Activated CD4-positive, alpha-beta memory T cell treated with anti-CD3 and anti-CD28 coated beads for 36 hours (primary cell): ENCODE measurements at regions of chr5 and their contacts with region 1.

Region 1: GRCh38 chr5:34486160-34486848 is 169.8 kb upstream of the RAI14 start:
- DNase-seq: peak; percentile 78
- H3K4me3 Mint-ChIP-seq: no peak overlapping the region
- H3K27ac Mint-ChIP-seq: no peak overlapping the region
- H3K4me1 Mint-ChIP-seq: peaks cover 8% of the 10 kb centered on the region
- H3K27me3 Mint-ChIP-seq: peaks cover 39% of the 10 kb centered on the region

Region 2: DNA sequence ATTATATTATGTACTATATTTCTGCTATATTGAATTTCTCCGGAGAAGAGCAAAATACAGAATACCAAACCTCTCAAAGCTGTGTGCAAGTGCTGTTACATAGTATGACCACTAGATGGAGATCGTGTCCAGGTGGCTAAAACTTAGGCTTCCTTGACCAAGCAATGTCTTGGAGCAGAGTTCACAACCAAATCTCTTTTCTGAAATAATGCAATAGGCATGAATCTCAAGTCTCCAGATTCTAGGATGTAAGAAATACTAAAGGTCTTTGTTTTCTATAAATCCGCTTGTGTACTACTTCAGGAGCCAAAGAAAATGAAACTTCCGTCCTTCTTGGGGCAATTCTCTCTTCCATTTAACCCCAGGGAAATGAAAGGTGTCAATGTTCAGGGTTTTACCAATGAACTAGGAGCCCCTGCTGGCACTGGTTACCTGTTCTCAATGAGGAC is 11.7 kb before region 1 on chr5:
- CTCF ChIA-PET with region 1: interaction called, 43 read pairs
- POLR2A ChIA-PET with region 1: interaction called, 3 read pairs
- intact Hi-C with region 1: no loop called
- DNase-seq: no peak
- H3K4me3 Mint-ChIP-seq: no peak overlapping the region
- H3K27ac Mint-ChIP-seq: no peak overlapping the region
- H3K4me1 Mint-ChIP-seq: no peaks in the 10 kb centered on the region
- H3K27me3 Mint-ChIP-seq: peaks cover 13% of the 10 kb centered on the region

Region 3: DNA sequence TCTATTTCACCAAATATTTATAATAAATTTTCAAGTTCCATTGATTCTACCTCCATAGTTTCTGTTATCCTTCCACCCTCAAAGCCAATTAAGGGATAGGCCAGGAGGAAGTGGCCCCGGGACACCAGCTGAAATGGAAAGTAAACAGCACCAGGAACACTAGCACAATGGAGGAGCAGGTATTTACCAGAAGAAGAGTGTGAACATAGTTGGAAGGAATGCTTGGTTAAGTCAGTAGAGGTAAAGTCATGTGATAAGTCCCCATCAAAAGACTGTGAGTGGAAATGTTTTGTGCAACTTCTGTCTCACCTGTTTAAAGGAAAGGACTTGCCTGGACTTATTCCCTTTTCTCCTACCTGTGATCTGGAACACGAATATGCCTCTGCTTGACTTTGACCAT is 23.1 kb after region 1 on chr5:
- CTCF ChIA-PET with region 1: interaction called, 10 read pairs
- POLR2A ChIA-PET with region 1: no interaction called
- intact Hi-C with region 1: no loop called
- DNase-seq: no peak
- H3K4me3 Mint-ChIP-seq: no peak overlapping the region
- H3K27ac Mint-ChIP-seq: no peak overlapping the region
- H3K4me1 Mint-ChIP-seq: peaks cover 7% of the 10 kb centered on the region
- H3K27me3 Mint-ChIP-seq: peaks cover 20% of the 10 kb centered on the region

Region 4: GRCh38 chr5:34533582-34534522 is 47.5 kb after region 1 on chr5:
- CTCF ChIA-PET with region 1: interaction called, 40 read pairs
- POLR2A ChIA-PET with region 1: no interaction called
- intact Hi-C with region 1: loop called (anchors 1 kb)
- DNase-seq: peak; percentile 48
- H3K4me3 Mint-ChIP-seq: no peak overlapping the region
- H3K27ac Mint-ChIP-seq: peak overlapping the region; percentile 24
- H3K4me1 Mint-ChIP-seq: peaks cover 28% of the 10 kb centered on the region
- H3K27me3 Mint-ChIP-seq: peaks cover 3% of the 10 kb centered on the region

Region 5: DNA sequence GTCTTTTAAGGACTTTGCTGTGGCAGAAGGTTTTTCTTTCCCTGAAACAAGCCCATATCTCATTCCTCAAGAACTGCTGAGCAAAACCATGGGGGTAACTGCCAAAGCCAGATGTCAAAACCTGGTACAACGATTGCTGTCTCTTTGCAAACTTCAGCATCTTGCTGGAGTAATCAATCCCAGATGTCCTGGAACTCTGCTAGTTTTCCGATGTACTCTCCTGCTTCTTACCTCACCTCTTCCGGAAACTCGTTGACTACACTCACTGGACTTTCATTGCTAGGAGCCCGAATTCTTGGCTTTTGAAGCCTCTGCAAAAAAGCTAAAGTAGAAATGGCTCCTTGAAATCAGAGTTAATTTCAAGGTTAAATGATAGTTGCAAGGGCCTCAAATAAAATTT is 405.7 kb after region 1 on chr5:
- CTCF ChIA-PET with region 1: interaction called, 12 read pairs
- POLR2A ChIA-PET with region 1: no interaction called
- intact Hi-C with region 1: no loop called
- DNase-seq: no peak
- H3K4me3 Mint-ChIP-seq: no peak overlapping the region
- H3K27ac Mint-ChIP-seq: no peak overlapping the region
- H3K4me1 Mint-ChIP-seq: no peaks in the 10 kb centered on the region
- H3K27me3 Mint-ChIP-seq: no peaks in the 10 kb centered on the region

Region 6: DNA sequence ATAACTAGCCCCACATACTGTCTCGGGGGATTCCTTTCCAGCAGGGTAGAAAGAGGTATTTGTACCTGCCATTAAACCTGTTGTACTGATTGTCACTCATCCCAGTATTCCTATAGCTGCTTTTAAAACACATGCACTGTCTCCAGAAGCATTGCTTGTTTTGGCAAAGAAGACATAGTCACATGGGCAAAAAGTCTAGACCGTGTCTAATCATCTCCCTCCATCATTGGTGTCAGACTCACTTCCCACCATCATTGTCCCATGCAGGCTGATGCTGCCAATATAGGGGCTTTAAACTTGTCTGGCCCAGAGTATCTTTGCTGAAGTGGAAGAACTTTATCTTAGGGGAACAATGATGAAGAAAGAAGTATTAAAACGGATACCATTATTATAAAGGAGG is 455.6 kb after region 1 on chr5:
- CTCF ChIA-PET with region 1: no interaction called
- POLR2A ChIA-PET with region 1: no interaction called
- intact Hi-C with region 1: no loop called
- DNase-seq: no peak
- H3K4me3 Mint-ChIP-seq: no peak overlapping the region
- H3K27ac Mint-ChIP-seq: no peak overlapping the region
- H3K4me1 Mint-ChIP-seq: no peaks in the 10 kb centered on the region
- H3K27me3 Mint-ChIP-seq: no peaks in the 10 kb centered on the region

Region 7: DNA sequence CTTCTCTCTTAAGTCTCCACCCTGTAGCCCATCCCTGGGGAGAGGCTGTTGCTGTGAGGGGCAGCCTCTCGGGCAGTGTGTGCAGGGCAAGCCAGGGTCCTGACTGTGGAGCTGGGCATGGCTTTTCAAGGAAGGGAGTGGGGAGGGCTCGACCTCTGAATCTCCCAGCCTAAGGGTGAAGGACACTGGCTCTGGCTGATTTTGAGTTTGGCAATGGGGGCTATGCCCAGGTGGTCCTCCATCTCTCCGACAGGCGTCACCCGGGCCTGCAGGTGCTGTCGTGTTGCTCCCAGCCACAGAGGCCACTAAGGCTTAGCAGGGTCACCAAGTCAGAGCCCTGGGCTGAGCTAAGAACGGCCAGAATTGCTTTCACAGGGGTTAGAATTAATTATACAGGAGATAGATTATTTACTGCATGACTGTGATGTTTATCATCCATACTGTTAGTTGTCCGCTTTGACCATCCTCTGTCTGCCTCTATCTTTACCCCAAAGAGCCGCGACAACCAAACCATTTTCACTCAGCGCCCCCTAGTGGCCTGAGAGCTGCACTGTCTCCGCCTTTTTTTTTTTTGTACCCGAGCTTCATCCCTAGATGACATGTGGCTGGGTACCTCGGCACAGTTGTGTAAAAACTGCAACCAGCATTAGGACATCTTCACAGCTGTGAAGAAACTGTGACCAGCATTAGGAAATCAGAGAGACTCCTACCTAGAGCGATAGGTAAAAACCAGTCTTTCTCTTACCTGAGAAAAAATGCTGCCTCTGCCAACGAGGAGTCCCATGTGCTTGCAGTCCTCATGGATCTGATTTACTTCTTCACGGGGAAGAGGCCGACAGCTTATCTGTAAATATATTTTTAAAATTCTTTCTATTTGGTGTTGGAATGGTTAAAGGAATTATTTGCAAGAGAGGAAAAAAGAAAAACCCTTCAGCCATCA is 517.0 kb after region 1 on chr5:
- CTCF ChIA-PET with region 1: interaction called, 7 read pairs
- POLR2A ChIA-PET with region 1: no interaction called
- intact Hi-C with region 1: loop called (anchors 1 kb)
- DNase-seq: peak; percentile 69
- H3K4me3 Mint-ChIP-seq: no peak overlapping the region
- H3K27ac Mint-ChIP-seq: no peak overlapping the region
- H3K4me1 Mint-ChIP-seq: no peaks in the 10 kb centered on the region
- H3K27me3 Mint-ChIP-seq: peaks cover 29% of the 10 kb centered on the region